ENCODE measurements at regions of chr12 and their contacts with region 1.

Region 1: GRCh38 chr12:93441617-93442410 is at the start of gene UBE2N:
- DNase-seq: peak; percentile 99
- ATAC-seq: peak; percentile 84
- H3K4me3 Mint-ChIP-seq: peak within 1 kb of the TSS; percentile 96
- H3K27ac Mint-ChIP-seq: peak within 1 kb of the TSS; percentile 96
- H3K4me1 Mint-ChIP-seq: peaks cover 56% of the 10 kb centered on the region
- H3K27me3 Mint-ChIP-seq: no peaks in the 10 kb centered on the region
- CTCF ChIP-seq: no peak
- total RNA-seq, gene UBE2N: 152 and 163 TPM in 2 replicates

Region 2: GRCh38 chr12:93427779-93428563 is 13.8 kb before region 1 on chr12:
- CTCF ChIA-PET with region 1: interaction called, 4 read pairs
- POLR2A ChIA-PET with region 1: interaction called, 24 read pairs
- intact Hi-C with region 1: loop called (anchors 1 kb)
- DNase-seq: no peak
- ATAC-seq: no peak
- H3K4me3 Mint-ChIP-seq: no peak overlapping the region
- H3K27ac Mint-ChIP-seq: peak overlapping the region; percentile 83
- H3K4me1 Mint-ChIP-seq: peaks cover 91% of the 10 kb centered on the region
- H3K27me3 Mint-ChIP-seq: no peaks in the 10 kb centered on the region
- CTCF ChIP-seq: no peak

Region 3: GRCh38 chr12:95003213-95003920 is 1561.6 kb after region 1 on chr12 and contains the start of gene NDUFA12:
- CTCF ChIA-PET with region 1: no interaction called
- POLR2A ChIA-PET with region 1: no interaction called
- intact Hi-C with region 1: loop called (anchors 10 kb)
- DNase-seq: peak; percentile 89
- ATAC-seq: peak; percentile 99
- H3K4me3 Mint-ChIP-seq: peak within 1 kb of the TSS; percentile 94
- H3K27ac Mint-ChIP-seq: peak within 1 kb of the TSS; percentile 90
- H3K4me1 Mint-ChIP-seq: peaks cover 35% of the 10 kb centered on the region
- H3K27me3 Mint-ChIP-seq: no peaks in the 10 kb centered on the region
- CTCF ChIP-seq: no peak
- total RNA-seq, gene NDUFA12: 80.2 and 81.7 TPM in 2 replicates